Body of pancreas (tissue), 4 donors: ENCODE measurements at regions of chr5 and their contacts with region 1.

Region 1: GRCh38 chr5:142699184-142699720 is 13.4 kb upstream of the FGF1 start:
- DNase-seq: peak; percentile 85 to 87 (median 86)
- ATAC-seq: peak; percentile 91
- H3K4me3 ChIP-seq: no peak overlapping the region
- H3K27ac ChIP-seq: no peak overlapping the region
- H3K4me1 ChIP-seq: peaks cover 14% of the 10 kb centered on the region
- H3K27me3 ChIP-seq: no peaks in the 10 kb centered on the region
- CTCF ChIP-seq: peak; percentile 80 to 97 (median 92)
- POLR2A ChIP-seq: no peak

Region 2: DNA sequence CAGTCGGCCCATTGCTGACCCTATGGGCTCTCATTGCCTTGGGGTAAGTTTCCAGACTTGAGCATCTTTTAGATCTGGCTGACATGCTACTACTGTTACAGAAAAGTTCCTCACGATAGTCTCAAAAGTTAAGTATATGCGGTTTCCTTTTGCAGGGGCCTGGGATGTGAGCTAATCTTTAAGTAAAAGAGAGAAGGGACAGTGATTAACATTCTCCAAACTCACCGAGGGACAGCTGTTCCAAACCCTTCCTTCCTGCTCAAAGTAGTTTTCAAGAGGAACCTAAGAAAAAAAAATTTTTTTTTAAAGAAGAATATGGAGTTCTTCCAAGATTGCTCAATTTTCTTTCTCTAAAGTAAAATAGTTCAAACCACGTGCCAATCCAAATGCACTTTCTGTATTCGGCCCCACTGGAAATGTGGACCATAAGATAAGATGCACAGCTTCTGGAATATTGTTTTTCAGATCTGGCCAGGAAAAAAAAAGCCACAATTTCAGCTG is 206.4 kb before region 1 on chr5:
- intact Hi-C with region 1: no loop called
- DNase-seq: no peak
- ATAC-seq: no peak
- H3K4me3 ChIP-seq: no peak overlapping the region
- H3K27ac ChIP-seq: peak overlapping the region in 1 of 4 donors; percentile 18
- H3K4me1 ChIP-seq: no peaks in the 10 kb centered on the region
- H3K27me3 ChIP-seq: no peaks in the 10 kb centered on the region
- CTCF ChIP-seq: no peak
- POLR2A ChIP-seq: no peak

Region 3: GRCh38 chr5:142611154-142611553 is 88.1 kb before region 1 on chr5:
- intact Hi-C with region 1: loop called (anchors 5 kb)
- DNase-seq: peak; percentile 74 to 82 (median 78)
- ATAC-seq: peak; percentile 79
- H3K4me3 ChIP-seq: no peak overlapping the region
- H3K27ac ChIP-seq: no peak overlapping the region
- H3K4me1 ChIP-seq: no peaks in the 10 kb centered on the region
- H3K27me3 ChIP-seq: no peaks in the 10 kb centered on the region
- CTCF ChIP-seq: peak; percentile 64 to 84 (median 82)
- POLR2A ChIP-seq: no peak

Region 4: GRCh38 chr5:142654578-142655058 is 44.6 kb before region 1 on chr5:
- intact Hi-C with region 1: loop called (anchors 5 kb)
- DNase-seq: no peak
- ATAC-seq: no peak
- H3K4me3 ChIP-seq: no peak overlapping the region
- H3K27ac ChIP-seq: no peak overlapping the region
- H3K4me1 ChIP-seq: no peaks in the 10 kb centered on the region
- H3K27me3 ChIP-seq: no peaks in the 10 kb centered on the region
- CTCF ChIP-seq: no peak
- POLR2A ChIP-seq: no peak